Posterior vena cava (tissue), 2 donors: ENCODE measurements at regions of chr13 and their contacts with region 1.

Region 1: GRCh38 chr13:33123066-33123859 is 107.0 kb downstream of the KL start:
- DNase-seq: no peak

Region 2: DNA sequence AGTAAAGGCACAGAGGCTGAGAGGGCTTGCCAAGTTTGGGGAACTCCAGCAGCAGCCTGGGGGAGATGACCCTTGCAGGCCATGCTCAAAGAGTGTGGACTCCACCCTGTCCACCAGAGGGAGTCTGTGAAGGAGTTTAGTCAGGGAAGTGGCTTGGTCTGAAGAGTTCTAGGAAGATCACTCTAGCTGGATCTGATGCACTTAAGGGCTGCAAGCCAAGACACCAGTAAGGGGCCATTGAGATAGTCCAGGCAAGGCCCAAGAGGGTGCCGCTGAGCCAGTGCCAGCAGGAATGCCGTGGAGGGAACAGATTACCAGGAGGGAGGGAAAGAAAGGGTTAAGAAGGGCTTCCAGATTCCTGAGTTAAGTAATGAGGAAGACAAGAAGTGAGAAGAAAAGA is 876.8 kb before region 1 on chr13:
- intact Hi-C with region 1: loop called in 1 of 2 experiments (anchors 5 kb)
- DNase-seq: no peak

Region 3: GRCh38 chr13:33034882-33035520 is 88.3 kb before region 1 on chr13:
- intact Hi-C with region 1: no loop called
- DNase-seq: no peak